ENCODE measurements at regions of chr6 and their contacts with region 1.

Region 1: GRCh38 chr6:28136585-28137504 is 4.8 kb upstream of the ZKSCAN8 start:
- DNase-seq: peak; percentile 69
- ATAC-seq: peak; percentile 42
- H3K4me3 Mint-ChIP-seq: peak overlapping the region; percentile 98
- H3K27ac Mint-ChIP-seq: peak overlapping the region; percentile 100
- H3K4me1 Mint-ChIP-seq: peaks cover 76% of the 10 kb centered on the region
- H3K27me3 Mint-ChIP-seq: no peaks in the 10 kb centered on the region
- CTCF ChIP-seq: no peak

Region 2: GRCh38 chr6:26596579-26597388 is 1540.1 kb before region 1 on chr6 and contains the start of gene ABT1:
- CTCF ChIA-PET with region 1: no interaction called
- POLR2A ChIA-PET with region 1: no interaction called
- intact Hi-C with region 1: loop called (anchors 2 kb)
- DNase-seq: peak; percentile 91
- ATAC-seq: peak; percentile 90
- H3K4me3 Mint-ChIP-seq: no peak within 1 kb of the TSS
- H3K27ac Mint-ChIP-seq: no peak within 1 kb of the TSS
- H3K4me1 Mint-ChIP-seq: peaks cover 17% of the 10 kb centered on the region
- H3K27me3 Mint-ChIP-seq: peaks cover 5% of the 10 kb centered on the region
- CTCF ChIP-seq: no peak
- total RNA-seq, gene ABT1: 30.7 and 30.8 TPM in 2 replicates

Region 3: GRCh38 chr6:27642744-27643456 is 493.9 kb before region 1 on chr6:
- CTCF ChIA-PET with region 1: no interaction called
- POLR2A ChIA-PET with region 1: no interaction called
- intact Hi-C with region 1: no loop called
- DNase-seq: no peak
- ATAC-seq: no peak
- H3K4me3 Mint-ChIP-seq: no peak overlapping the region
- H3K27ac Mint-ChIP-seq: no peak overlapping the region
- H3K4me1 Mint-ChIP-seq: no peaks in the 10 kb centered on the region
- H3K27me3 Mint-ChIP-seq: peaks cover 32% of the 10 kb centered on the region
- CTCF ChIP-seq: no peak

Region 4: GRCh38 chr6:27902335-27903314 is 234.2 kb before region 1 on chr6:
- CTCF ChIA-PET with region 1: no interaction called
- POLR2A ChIA-PET with region 1: no interaction called
- intact Hi-C with region 1: loop called (anchors 2 kb)
- DNase-seq: peak; percentile 75
- ATAC-seq: peak; percentile 83
- H3K4me3 Mint-ChIP-seq: peak overlapping the region; percentile 89
- H3K27ac Mint-ChIP-seq: peak overlapping the region; percentile 96
- H3K4me1 Mint-ChIP-seq: peaks cover 10% of the 10 kb centered on the region
- H3K27me3 Mint-ChIP-seq: peaks cover 3% of the 10 kb centered on the region
- CTCF ChIP-seq: no peak

Region 5: DNA sequence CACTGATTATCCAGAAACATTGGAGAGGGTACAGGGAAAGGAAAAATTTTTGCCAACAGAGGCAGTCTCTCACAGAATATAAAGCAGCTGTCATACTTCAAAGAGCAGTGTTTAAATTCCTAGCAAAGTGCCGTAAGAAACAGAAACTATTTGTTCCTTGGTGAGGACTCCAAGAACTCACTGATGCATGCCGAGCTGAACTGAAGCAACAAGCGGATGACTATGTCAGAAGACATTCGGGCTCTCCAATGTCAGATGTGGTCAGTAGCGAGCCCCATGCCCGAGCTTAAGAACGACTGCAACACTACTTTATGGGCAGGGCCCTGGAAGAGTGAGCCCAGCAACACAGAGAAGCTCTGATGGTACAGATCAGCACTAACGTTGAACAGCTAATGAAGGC is 125.1 kb before region 1 on chr6:
- CTCF ChIA-PET with region 1: no interaction called
- POLR2A ChIA-PET with region 1: no interaction called
- intact Hi-C with region 1: no loop called
- DNase-seq: no peak
- ATAC-seq: no peak
- H3K4me3 Mint-ChIP-seq: no peak overlapping the region
- H3K27ac Mint-ChIP-seq: no peak overlapping the region
- H3K4me1 Mint-ChIP-seq: peaks cover 37% of the 10 kb centered on the region
- H3K27me3 Mint-ChIP-seq: peaks cover 5% of the 10 kb centered on the region
- CTCF ChIP-seq: no peak

Region 6: DNA sequence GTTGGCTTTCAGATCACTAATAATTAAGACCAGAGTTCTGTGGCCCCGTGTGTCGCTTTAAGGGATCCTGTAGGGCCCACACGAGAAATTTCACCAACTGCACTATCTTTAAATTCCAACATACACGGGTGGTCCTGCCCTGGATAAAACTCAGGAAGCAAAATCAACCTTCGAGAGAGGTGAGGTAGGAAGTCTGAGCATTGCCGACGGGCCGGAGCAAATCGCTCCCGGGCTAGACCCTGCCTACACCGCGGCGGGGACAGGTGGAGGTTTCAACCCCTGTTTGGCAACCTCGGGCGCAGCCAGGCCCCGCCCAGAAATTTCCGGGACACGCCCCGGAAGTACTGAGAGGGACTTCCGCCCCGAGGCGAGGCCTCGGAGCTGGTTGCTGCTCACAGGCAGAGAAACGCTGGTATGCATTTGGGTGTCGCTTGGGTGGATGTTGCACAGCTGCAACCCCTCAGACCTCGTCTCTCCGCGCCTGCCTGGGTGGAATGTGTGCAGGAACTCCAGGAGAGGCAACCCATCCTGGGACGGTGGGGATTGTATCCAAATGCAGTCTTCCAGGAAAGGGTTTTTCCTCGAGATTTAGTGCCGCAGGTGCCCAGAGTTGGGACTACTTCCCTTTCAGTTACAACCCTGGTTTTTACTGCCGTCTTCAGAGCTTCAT is 24.7 kb after region 1 on chr6:
- CTCF ChIA-PET with region 1: no interaction called
- POLR2A ChIA-PET with region 1: interaction called, 13 read pairs
- intact Hi-C with region 1: loop called (anchors 2 kb)
- DNase-seq: peak; percentile 79
- ATAC-seq: peak; percentile 96
- H3K4me3 Mint-ChIP-seq: peak overlapping the region; percentile 81
- H3K27ac Mint-ChIP-seq: peak overlapping the region; percentile 62
- H3K4me1 Mint-ChIP-seq: peaks cover 16% of the 10 kb centered on the region
- H3K27me3 Mint-ChIP-seq: no peaks in the 10 kb centered on the region
- CTCF ChIP-seq: no peak

Region 7: GRCh38 chr6:28266962-28267694 is 130.3 kb after region 1 on chr6 and contains the start of gene ZSCAN26:
- CTCF ChIA-PET with region 1: interaction called, 6 read pairs
- POLR2A ChIA-PET with region 1: interaction called, 28 read pairs
- intact Hi-C with region 1: loop called (anchors 1 kb)
- DNase-seq: peak; percentile 77
- ATAC-seq: peak; percentile 96
- H3K4me3 Mint-ChIP-seq: no peak within 1 kb of the TSS
- H3K27ac Mint-ChIP-seq: peak within 1 kb of the TSS; percentile 46
- H3K4me1 Mint-ChIP-seq: peaks cover 10% of the 10 kb centered on the region
- H3K27me3 Mint-ChIP-seq: no peaks in the 10 kb centered on the region
- CTCF ChIP-seq: no peak
- total RNA-seq, gene ZSCAN26: 16.0 and 17.8 TPM in 2 replicates

Region 8: GRCh38 chr6:28383235-28384142 is 246.6 kb after region 1 on chr6:
- CTCF ChIA-PET with region 1: interaction called, 4 read pairs
- POLR2A ChIA-PET with region 1: interaction called, 12 read pairs
- intact Hi-C with region 1: no loop called
- DNase-seq: peak; percentile 77
- ATAC-seq: peak; percentile 98
- H3K4me3 Mint-ChIP-seq: peak overlapping the region; percentile 88
- H3K27ac Mint-ChIP-seq: peak overlapping the region; percentile 94
- H3K4me1 Mint-ChIP-seq: peaks cover 18% of the 10 kb centered on the region
- H3K27me3 Mint-ChIP-seq: no peaks in the 10 kb centered on the region
- CTCF ChIP-seq: no peak